Right cardiac atrium (tissue), 5 donors: ENCODE measurements at regions of chr1 and their contacts with region 1.

Region 1: DNA sequence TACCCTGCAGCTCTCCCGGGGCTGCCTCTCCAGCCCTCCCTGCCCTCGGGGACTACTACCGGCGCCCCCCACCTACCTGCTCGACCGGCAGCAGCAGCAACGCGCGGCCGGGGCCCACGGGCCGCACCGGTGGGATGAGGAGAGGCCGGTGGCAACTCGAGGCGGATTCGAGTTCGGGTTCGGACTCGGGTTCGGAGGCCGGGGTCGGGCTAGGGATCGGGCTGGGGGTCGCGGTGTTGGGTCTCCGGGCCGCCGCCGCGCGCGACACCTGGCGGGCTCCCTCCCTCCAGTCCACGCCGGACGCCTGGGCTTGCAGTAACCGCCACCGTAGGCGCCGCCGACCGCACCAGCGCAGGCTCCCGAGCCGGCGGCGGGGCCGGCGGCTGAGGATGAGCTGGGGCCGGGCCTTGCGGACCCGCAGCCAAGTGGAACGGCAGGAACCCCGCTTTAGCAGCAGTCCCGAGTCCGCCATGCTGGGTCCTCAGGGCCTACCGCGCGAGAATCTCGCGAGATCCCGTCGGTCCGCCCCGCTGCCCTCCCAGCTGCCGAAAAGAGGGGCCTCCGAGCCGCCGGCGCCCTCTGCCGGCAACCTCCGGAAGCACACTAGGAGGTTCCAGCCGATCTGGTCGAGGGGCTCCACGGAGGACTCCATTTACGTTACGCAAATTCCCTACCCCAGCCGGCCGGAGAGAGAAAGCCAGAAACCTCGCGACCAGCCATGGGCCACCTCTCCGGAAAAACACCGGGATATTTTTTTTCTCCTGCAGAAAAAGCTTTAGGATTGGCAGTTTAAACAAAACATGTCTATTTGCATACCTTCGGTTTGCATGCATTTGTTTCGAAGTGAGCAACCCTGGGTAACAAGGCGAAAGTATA is at the start of gene NOL9:
- DNase-seq: peak; percentile 95 to 99 (median 98)
- ATAC-seq: peak; percentile 97
- H3K4me3 ChIP-seq: peak within 1 kb of the TSS; percentile 82
- H3K27ac ChIP-seq: peak within 1 kb of the TSS; percentile 54
- H3K4me1 ChIP-seq: peaks cover 2% of the 10 kb centered on the region
- H3K27me3 ChIP-seq: no peaks in the 10 kb centered on the region
- total RNA-seq, gene NOL9: 12.8 to 17.1 (median 15.6) TPM

Region 2: DNA sequence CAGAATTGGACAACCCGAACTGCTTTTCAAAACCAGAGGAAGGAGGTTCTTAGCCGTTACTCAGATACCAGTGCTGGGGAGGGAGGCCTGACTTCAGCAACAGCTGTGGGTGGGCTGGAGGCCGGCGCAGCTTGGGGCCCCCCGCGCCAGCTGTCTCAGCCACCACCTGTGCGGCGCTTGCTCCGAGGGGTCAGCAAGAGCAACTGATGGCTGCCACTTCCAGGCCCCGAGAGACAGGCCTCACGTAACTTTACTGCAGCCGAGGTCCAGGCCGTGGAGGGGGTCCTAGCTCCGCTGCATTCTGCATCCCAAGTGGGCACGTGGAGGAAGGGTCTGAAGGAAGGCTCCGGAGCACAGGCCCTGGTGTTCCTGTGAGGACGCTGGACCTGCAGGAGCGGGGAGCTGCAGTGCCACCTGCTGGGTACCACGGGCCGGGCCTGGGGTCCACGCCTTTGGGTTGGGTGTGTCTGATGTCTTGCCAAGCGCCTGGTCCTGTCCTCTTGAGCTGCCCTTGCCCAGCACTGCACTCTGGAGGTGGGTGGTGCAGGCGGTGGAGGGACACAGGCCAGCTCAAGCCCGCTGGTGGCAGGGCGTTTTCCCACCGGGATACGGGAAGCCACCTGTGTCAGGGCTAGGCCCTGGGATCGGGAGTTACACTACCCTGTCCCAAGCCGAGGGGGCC is 80.2 kb after region 1 on chr1:
- intact Hi-C with region 1: loop called in 2 of 4 experiments (anchors 5 to 10 kb)
- DNase-seq: peak; percentile 57 to 85 (median 84)
- ATAC-seq: peak; percentile 61
- H3K4me3 ChIP-seq: no peak overlapping the region
- H3K27ac ChIP-seq: no peak overlapping the region
- H3K4me1 ChIP-seq: no peaks in the 10 kb centered on the region
- H3K27me3 ChIP-seq: no peaks in the 10 kb centered on the region